ENCODE measurements at regions of chr3 and their contacts with region 1.

Region 1: GRCh38 chr3:65439641-65440284 is 599.0 kb downstream of the MAGI1 start:
- DNase-seq: no peak

Region 2: DNA sequence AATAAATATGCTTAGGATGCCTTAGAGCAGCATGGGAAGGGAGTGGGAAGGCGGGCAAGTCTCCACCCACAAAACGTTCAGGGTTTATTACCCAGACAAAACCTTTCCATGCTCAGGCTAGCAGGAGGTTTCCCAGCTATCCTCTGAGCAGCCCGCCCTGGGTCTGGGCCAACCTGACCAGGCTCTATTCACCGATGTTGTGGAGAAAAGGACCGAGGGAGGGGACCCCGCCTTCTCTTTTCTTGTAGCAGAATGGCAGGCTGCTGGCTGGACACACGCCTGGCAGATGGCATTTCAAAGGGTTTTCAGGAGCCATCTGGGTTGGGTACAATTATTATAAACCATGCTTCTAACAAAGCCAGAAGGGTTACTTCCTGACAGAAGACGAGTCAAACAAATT is 58.1 kb after region 1 on chr3:
- intact Hi-C with region 1: loop called (anchors 5 kb)
- DNase-seq: no peak

Region 3: GRCh38 chr3:65672871-65673815 is 233.4 kb after region 1 on chr3:
- intact Hi-C with region 1: loop called (anchors 2 kb)
- DNase-seq: no peak

Region 4: DNA sequence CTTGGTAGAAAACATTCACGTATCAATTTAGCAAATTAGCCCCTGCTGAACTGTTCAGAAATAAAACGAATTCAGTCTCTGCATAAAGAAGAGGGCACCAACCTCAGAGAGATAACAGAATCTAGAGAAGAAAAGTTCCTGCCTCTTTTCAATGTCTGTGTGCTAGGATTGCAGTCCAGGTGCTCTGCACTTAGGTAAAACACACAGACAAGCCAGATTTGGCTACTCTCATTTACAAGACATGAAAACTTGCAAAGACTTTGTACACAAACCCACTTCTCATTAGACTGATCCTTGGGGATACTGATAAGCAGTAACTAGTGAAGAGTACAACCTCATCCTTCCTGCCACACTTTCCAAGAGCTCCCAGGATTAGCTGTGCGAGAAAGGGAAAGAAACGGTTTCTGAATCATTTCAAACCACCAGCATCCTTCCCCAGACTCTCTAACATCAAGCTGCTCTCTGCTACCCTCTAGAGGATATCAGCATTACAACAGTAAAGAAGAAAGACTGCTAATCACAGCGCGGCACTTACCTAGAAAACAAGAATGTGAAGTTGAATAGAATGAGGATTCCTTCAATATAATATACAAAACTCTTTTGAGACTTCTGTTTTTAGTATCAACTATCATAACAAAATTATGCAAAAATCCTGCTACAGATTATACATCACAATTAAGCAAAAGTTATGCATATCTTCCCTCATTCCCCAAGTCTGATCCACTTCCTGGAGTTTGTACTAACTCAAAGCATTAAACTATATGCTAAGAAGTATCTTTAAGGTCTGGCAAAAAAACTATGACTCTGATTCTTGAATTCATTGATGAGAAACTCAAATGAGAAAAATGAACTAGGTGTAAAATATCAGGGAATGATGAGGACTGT is 292.5 kb after region 1 on chr3:
- intact Hi-C with region 1: loop called (anchors 2 kb)
- DNase-seq: no peak